ENCODE measurements at regions of chrX and their contacts with region 1.

Region 1: GRCh38 chrX:8743126-8743732 is 11.3 kb upstream of the ANOS1 start:
- DNase-seq: peak in 1 of 2 donors; percentile 31
- ATAC-seq: peak in 1 of 2 donors; percentile 36
- H3K4me3 ChIP-seq: no peak overlapping the region
- H3K27ac ChIP-seq: no peak overlapping the region
- H3K4me1 ChIP-seq: no peaks in the 10 kb centered on the region
- H3K27me3 ChIP-seq: peaks cover 0 to 3% (median 0%) of the 10 kb centered on the region in 3 donors
- CTCF ChIP-seq: peak; percentile 19 to 73 (median 58)
- POLR2A ChIP-seq: no peak

Region 2: DNA sequence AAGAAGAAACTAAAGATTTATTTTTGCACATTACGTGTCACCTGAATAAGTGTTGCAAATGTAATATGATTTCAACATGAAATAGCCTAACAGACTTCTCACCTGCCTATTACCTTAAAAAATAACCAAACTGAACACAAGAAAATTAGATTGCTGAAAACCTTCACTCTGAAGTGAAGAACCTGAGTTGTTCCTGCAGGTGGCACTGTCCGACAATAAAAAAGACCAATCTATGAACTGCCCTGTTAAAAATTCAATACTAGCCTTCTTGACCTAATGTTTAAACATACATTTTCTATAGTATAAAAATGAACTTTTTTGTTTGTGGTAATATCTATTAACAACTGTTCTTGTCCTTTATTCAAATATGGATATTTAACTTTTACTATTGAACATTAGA is 746.8 kb before region 1 on chrX:
- in situ Hi-C with region 1: loop called (anchors 10 to 25 kb)
- intact Hi-C with region 1: loop called (anchors 5 kb)
- DNase-seq: no peak
- ATAC-seq: peak in 1 of 2 donors; percentile 39
- H3K4me3 ChIP-seq: no peak overlapping the region
- H3K27ac ChIP-seq: no peak overlapping the region
- H3K4me1 ChIP-seq: no peaks in the 10 kb centered on the region
- H3K27me3 ChIP-seq: no peaks in the 10 kb centered on the region
- CTCF ChIP-seq: peak; percentile 38 to 54 (median 42)
- POLR2A ChIP-seq: no peak

Region 3: GRCh38 chrX:8364369-8365141 is 378.7 kb before region 1 on chrX:
- in situ Hi-C with region 1: no loop called
- intact Hi-C with region 1: loop called (anchors 5 kb)
- DNase-seq: peak; percentile 2 to 41
- ATAC-seq: peak; percentile 58 to 76
- H3K4me3 ChIP-seq: no peak overlapping the region
- H3K27ac ChIP-seq: no peak overlapping the region
- H3K4me1 ChIP-seq: no peaks in the 10 kb centered on the region
- H3K27me3 ChIP-seq: no peaks in the 10 kb centered on the region
- CTCF ChIP-seq: peak; percentile 35 to 62 (median 47)
- POLR2A ChIP-seq: no peak

Region 4: GRCh38 chrX:8815464-8816065 is 72.3 kb after region 1 on chrX:
- in situ Hi-C with region 1: no loop called
- intact Hi-C with region 1: loop called (anchors 2 kb)
- DNase-seq: no peak
- ATAC-seq: no peak
- H3K4me3 ChIP-seq: no peak overlapping the region
- H3K27ac ChIP-seq: no peak overlapping the region
- H3K4me1 ChIP-seq: no peaks in the 10 kb centered on the region
- H3K27me3 ChIP-seq: no peaks in the 10 kb centered on the region
- CTCF ChIP-seq: peak; percentile 16 to 73 (median 50)
- POLR2A ChIP-seq: no peak